Activated CD4-positive, alpha-beta T cell treated with anti-CD3 and anti-CD28 coated beads for 36 hours (primary cell): ENCODE measurements at regions of chr18 and their contacts with region 1.

Region 1: GRCh38 chr18:394997-395383 is 105.5 kb downstream of the COLEC12 start:
- DNase-seq: no peak
- ATAC-seq: no peak
- H3K4me3 Mint-ChIP-seq: no peak overlapping the region
- H3K27ac Mint-ChIP-seq: no peak overlapping the region
- H3K4me1 Mint-ChIP-seq: no peaks in the 10 kb centered on the region
- H3K27me3 Mint-ChIP-seq: peaks cover 5% of the 10 kb centered on the region

Region 2: DNA sequence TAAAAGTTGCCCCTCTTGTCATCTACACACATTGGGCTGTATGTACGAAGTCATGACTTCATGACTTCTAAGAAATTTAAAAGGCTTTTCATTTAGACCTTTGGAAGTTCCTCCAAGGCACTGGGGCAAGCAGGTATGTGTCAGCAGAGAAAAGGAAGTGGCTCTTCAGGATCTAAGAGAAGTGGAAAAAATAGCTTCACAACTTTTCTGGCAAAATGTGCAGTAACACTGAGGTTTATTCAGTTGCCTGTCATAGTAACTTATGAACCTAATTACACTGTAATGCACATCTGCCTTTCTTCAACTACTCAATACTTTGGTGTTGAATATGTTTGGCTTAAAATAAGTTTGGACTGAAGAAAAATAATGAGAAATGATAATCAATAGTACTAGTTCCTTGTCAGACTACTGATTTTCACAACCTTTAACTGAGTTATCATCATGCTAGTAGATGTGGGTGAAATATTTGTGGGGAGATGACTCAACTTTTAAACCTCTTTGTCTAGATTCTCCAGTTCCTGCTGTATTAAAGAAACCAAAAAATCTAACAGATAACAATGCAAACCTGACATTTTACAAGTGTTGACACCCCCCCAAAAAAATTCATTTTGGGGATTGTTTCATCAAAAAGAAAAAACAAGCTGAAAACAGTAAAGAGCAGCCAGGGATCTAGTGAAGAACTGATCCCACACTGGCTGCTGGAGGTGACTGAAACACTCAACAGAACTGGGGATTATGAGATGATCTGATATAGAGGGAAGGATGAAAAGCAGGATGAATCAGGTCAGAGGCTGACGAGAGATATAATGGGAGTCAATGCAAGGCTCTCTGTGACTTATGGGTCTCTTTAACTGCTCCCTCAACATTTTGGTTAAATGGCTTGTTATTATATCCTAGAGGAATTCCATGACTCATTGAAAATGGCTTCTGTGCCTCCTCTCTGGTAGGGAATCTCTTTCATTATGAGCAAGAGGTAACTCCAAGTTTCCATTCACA is 20.9 kb after region 1 on chr18:
- CTCF ChIA-PET with region 1: no interaction called
- POLR2A ChIA-PET with region 1: no interaction called
- intact Hi-C with region 1: loop called in 1 of 2 experiments (anchors 2 kb)
- DNase-seq: no peak
- ATAC-seq: no peak
- H3K4me3 Mint-ChIP-seq: no peak overlapping the region
- H3K27ac Mint-ChIP-seq: no peak overlapping the region
- H3K4me1 Mint-ChIP-seq: peaks cover 1% of the 10 kb centered on the region
- H3K27me3 Mint-ChIP-seq: peaks cover 8% of the 10 kb centered on the region